WTC11 (cell line): ENCODE measurements at regions of chr1 and their contacts with region 1.

Region 1: GRCh38 chr1:44294588-44295007 is 60.5 kb downstream of the ERI3 start:
- DNase-seq: peak; percentile 73
- ATAC-seq: peak; percentile 97
- H3K4me3 Mint-ChIP-seq: no peak overlapping the region
- H3K27ac Mint-ChIP-seq: no peak overlapping the region
- H3K4me1 Mint-ChIP-seq: no peaks in the 10 kb centered on the region
- H3K27me3 Mint-ChIP-seq: no peaks in the 10 kb centered on the region
- CTCF ChIP-seq: no peak; the same call in 1 of the 2 replicates

Region 2: DNA sequence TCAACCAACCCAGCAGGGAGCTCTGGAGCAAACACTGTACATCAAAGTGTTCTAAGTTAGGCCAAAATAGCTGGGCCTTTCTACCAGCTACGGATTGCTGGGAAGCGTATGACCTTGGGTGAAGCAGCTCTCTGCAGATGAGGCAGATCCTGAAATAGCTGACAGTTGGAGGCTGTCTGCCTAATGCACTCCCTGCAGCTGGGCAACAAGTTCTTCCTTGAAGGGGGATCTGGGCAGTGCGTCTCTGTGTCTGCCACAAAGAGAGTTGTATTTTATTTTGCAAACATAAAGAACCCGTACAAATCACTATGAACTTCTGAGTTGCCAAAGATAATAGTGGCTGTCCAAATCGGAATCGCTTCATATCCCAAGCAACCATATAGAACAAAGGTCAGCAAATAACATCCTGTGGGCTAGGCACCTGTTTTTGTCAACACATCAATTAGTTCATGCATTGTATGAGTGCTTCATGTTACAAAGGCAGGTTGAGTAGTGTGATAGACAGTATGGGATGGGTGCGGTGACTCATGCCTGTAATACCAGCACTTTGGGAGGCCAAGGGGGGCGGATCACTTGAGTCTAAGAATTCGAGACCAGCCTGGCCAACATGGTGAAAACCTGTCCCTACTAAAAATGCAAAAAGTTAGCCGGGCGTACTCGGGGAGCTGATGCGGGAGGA is 205.1 kb before region 1 on chr1:
- CTCF ChIA-PET with region 1: interaction called, 12 read pairs
- POLR2A ChIA-PET with region 1: no interaction called
- DNase-seq: peak; percentile 21
- ATAC-seq: peak; percentile 43
- H3K4me3 Mint-ChIP-seq: no peak overlapping the region
- H3K27ac Mint-ChIP-seq: no peak overlapping the region
- H3K4me1 Mint-ChIP-seq: peaks cover 26% of the 10 kb centered on the region
- H3K27me3 Mint-ChIP-seq: peaks cover 5% of the 10 kb centered on the region; the same call in 1 of the 2 replicates
- CTCF ChIP-seq: no peak

Region 3: GRCh38 chr1:44213222-44214112 is 81.1 kb before region 1 on chr1 and contains the start of gene DMAP1:
- CTCF ChIA-PET with region 1: interaction called, 57 read pairs
- POLR2A ChIA-PET with region 1: no interaction called
- DNase-seq: peak; percentile 83
- ATAC-seq: peak; percentile 85
- H3K4me3 Mint-ChIP-seq: peak within 1 kb of the TSS; percentile 96
- H3K27ac Mint-ChIP-seq: no peak within 1 kb of the TSS
- H3K4me1 Mint-ChIP-seq: peaks cover 9% of the 10 kb centered on the region
- H3K27me3 Mint-ChIP-seq: peaks cover 18% of the 10 kb centered on the region
- CTCF ChIP-seq: no peak
- total RNA-seq, gene DMAP1: 40.9 to 44.4 TPM (median 42.3 TPM) in 3 replicates

Region 4: GRCh38 chr1:44228218-44228617 is 66.4 kb before region 1 on chr1:
- CTCF ChIA-PET with region 1: no interaction called
- POLR2A ChIA-PET with region 1: no interaction called
- DNase-seq: no peak
- ATAC-seq: no peak
- H3K4me3 Mint-ChIP-seq: no peak overlapping the region
- H3K27ac Mint-ChIP-seq: no peak overlapping the region
- H3K4me1 Mint-ChIP-seq: no peaks in the 10 kb centered on the region
- H3K27me3 Mint-ChIP-seq: peaks cover 14% of the 10 kb centered on the region
- CTCF ChIP-seq: no peak

Region 5: GRCh38 chr1:44249543-44249942 is 45.1 kb before region 1 on chr1:
- CTCF ChIA-PET with region 1: interaction called, 12 read pairs
- POLR2A ChIA-PET with region 1: no interaction called
- DNase-seq: peak; percentile 40
- ATAC-seq: peak; percentile 87
- H3K4me3 Mint-ChIP-seq: no peak overlapping the region
- H3K27ac Mint-ChIP-seq: no peak overlapping the region; the same call in 1 of the 2 replicates
- H3K4me1 Mint-ChIP-seq: peaks cover 16% of the 10 kb centered on the region
- H3K27me3 Mint-ChIP-seq: no peaks in the 10 kb centered on the region
- CTCF ChIP-seq: no peak

Region 6: DNA sequence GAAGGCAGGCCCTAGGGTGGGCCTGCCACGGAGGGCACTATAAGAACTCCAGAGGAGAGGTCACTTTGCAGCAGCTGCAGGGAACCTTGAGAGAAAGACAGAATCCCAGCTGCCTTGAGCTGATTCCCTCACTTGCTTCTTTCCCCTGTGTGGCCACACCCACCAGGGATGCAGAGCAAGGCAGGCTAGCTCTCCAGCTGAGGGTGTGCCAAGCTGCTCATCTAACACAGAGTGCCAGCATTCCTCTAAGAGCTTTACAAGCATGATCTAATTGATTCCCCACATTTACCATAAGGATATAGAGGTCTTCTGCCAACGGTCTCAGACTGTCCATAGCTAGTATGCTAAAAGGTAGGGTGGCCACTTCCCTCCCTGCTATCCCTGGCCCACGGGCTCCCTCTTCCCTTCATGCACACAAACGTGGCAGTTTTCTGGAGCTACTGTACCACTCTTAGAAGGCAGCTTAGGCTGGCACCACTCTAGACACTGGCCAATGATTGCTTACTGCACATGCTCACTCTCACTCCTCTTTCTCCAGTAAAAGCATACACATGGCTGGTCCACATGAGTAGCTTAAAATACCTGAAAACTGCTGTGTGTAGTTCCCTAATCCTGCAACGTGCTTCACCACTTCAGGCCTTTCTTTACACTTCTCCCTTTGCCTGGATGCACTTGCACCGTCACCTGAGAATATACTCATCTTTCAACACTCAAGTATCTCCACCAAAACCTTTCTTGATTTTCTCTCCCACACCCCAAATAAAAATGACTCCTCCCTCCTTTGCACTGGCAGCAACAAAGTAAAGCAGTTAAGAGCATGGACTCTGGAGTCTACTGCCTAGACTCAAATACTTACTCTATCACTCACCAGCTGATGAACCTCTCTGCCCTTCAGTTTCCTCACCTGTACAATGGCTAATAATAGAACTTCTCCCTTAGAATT is 23.6 kb before region 1 on chr1:
- CTCF ChIA-PET with region 1: interaction called, 16 read pairs
- POLR2A ChIA-PET with region 1: no interaction called
- DNase-seq: no peak
- ATAC-seq: no peak
- H3K4me3 Mint-ChIP-seq: no peak overlapping the region
- H3K27ac Mint-ChIP-seq: no peak overlapping the region
- H3K4me1 Mint-ChIP-seq: no peaks in the 10 kb centered on the region
- H3K27me3 Mint-ChIP-seq: no peaks in the 10 kb centered on the region
- CTCF ChIP-seq: no peak

Region 7: GRCh38 chr1:44312399-44313196 is 18.0 kb after region 1 on chr1:
- CTCF ChIA-PET with region 1: interaction called, 12 read pairs
- POLR2A ChIA-PET with region 1: no interaction called
- DNase-seq: no peak
- ATAC-seq: no peak
- H3K4me3 Mint-ChIP-seq: no peak overlapping the region
- H3K27ac Mint-ChIP-seq: no peak overlapping the region
- H3K4me1 Mint-ChIP-seq: peaks cover 7% of the 10 kb centered on the region
- H3K27me3 Mint-ChIP-seq: no peaks in the 10 kb centered on the region
- CTCF ChIP-seq: no peak

Region 8: DNA sequence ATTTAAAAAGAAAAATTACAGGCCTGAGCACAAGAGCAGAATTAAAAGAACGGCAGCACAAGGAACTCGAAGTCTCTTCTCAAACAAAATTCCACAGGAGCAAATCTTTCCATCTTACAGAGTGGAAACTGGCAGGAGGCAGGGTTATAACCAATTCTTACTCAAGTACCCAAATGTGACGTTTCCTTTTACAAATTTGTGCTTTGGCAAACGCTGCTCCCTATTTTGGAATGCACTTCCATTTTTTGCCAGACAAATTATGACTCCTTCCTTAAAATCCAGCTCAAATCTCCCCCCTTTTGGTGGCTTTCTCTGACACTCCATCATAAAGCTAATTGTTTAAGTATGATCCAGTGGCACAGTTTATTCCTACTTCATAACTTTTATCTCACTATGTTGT is 52.7 kb after region 1 on chr1:
- CTCF ChIA-PET with region 1: no interaction called
- POLR2A ChIA-PET with region 1: no interaction called
- DNase-seq: no peak
- ATAC-seq: no peak
- H3K4me3 Mint-ChIP-seq: no peak overlapping the region
- H3K27ac Mint-ChIP-seq: no peak overlapping the region
- H3K4me1 Mint-ChIP-seq: peaks cover 29% of the 10 kb centered on the region
- H3K27me3 Mint-ChIP-seq: no peaks in the 10 kb centered on the region; the same call in 1 of the 2 replicates
- CTCF ChIP-seq: no peak

Region 9: GRCh38 chr1:44390277-44390676 is 95.7 kb after region 1 on chr1:
- CTCF ChIA-PET with region 1: no interaction called
- POLR2A ChIA-PET with region 1: no interaction called
- DNase-seq: no peak
- ATAC-seq: no peak
- H3K4me3 Mint-ChIP-seq: no peak overlapping the region
- H3K27ac Mint-ChIP-seq: no peak overlapping the region
- H3K4me1 Mint-ChIP-seq: peaks cover 3% of the 10 kb centered on the region; the same call in 1 of the 2 replicates
- H3K27me3 Mint-ChIP-seq: no peaks in the 10 kb centered on the region; the same call in 1 of the 2 replicates
- CTCF ChIP-seq: no peak

Region 10: GRCh38 chr1:44401256-44402228 is 106.9 kb after region 1 on chr1:
- CTCF ChIA-PET with region 1: no interaction called
- POLR2A ChIA-PET with region 1: no interaction called
- DNase-seq: no peak
- ATAC-seq: no peak
- H3K4me3 Mint-ChIP-seq: no peak overlapping the region
- H3K27ac Mint-ChIP-seq: no peak overlapping the region
- H3K4me1 Mint-ChIP-seq: no peaks in the 10 kb centered on the region
- H3K27me3 Mint-ChIP-seq: peaks cover 23% of the 10 kb centered on the region
- CTCF ChIP-seq: no peak